Activated naive CD4-positive, alpha-beta T cell treated with anti-CD3 and anti-CD28 coated beads for 36 hours (primary cell): ENCODE measurements at regions of chr1 and their contacts with region 1.

Region 1: GRCh38 chr1:51235673-51236530 is at the start of gene RNF11:
- DNase-seq: peak; percentile 93
- H3K4me3 Mint-ChIP-seq: peak within 1 kb of the TSS; percentile 96
- H3K27ac Mint-ChIP-seq: peak within 1 kb of the TSS; percentile 89
- H3K4me1 Mint-ChIP-seq: peaks cover 35% of the 10 kb centered on the region
- H3K27me3 Mint-ChIP-seq: no peaks in the 10 kb centered on the region
- total RNA-seq, gene RNF11: 14.9 to 17.7 TPM

Region 2: DNA sequence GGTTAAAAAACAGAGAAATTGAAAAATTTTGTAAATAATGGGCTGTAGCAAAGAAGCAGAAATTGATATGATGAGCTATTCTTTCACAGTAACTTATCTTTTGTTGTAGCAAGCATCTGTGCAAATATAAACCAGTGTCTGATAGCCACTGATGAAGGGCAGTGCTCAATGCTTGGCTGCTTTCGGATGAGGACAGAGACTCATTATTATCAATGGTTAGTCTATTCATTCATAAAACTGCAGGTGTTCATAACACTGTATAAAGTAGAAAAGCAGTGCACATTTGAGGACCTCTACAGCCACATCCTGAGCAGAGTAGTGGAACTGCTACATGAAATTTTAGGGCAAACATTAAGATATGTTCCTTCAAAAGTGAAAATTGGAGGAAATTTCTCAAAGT is 383.0 kb before region 1 on chr1:
- CTCF ChIA-PET with region 1: no interaction called
- intact Hi-C with region 1: no loop called
- DNase-seq: no peak
- H3K4me3 Mint-ChIP-seq: no peak overlapping the region
- H3K27ac Mint-ChIP-seq: no peak overlapping the region
- H3K4me1 Mint-ChIP-seq: peaks cover 14% of the 10 kb centered on the region
- H3K27me3 Mint-ChIP-seq: no peaks in the 10 kb centered on the region

Region 3: GRCh38 chr1:50959913-50960844 is 275.7 kb before region 1 on chr1 and contains the start of gene FAF1:
- CTCF ChIA-PET with region 1: no interaction called
- intact Hi-C with region 1: loop called (anchors 2 kb)
- DNase-seq: peak; percentile 97
- H3K4me3 Mint-ChIP-seq: peak within 1 kb of the TSS; percentile 86
- H3K27ac Mint-ChIP-seq: peak within 1 kb of the TSS; percentile 85
- H3K4me1 Mint-ChIP-seq: peaks cover 25% of the 10 kb centered on the region
- H3K27me3 Mint-ChIP-seq: no peaks in the 10 kb centered on the region
- total RNA-seq, gene FAF1: 87.9 to 90.1 TPM

Region 4: DNA sequence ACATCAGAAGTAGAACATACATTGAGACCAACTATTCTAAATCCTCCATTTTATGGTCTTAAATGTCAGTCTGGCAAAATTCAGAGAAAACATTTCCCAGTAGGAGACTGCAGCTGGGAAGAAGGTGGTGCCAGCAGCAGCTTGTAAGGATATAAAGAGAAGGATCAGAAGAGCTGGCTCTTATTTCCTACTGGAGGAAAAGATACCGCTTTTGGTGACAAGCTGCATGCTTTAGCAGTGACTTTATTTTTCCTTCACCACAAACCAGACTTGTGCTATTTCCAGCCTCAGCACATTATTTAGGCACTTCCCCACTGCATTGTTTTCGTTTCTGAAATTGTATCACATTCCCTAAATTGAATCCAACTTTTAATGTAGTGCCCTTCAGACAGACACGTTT is 28.5 kb after region 1 on chr1:
- CTCF ChIA-PET with region 1: no interaction called
- intact Hi-C with region 1: loop called (anchors 2 kb)
- DNase-seq: no peak
- H3K4me3 Mint-ChIP-seq: no peak overlapping the region
- H3K27ac Mint-ChIP-seq: no peak overlapping the region
- H3K4me1 Mint-ChIP-seq: peaks cover 62% of the 10 kb centered on the region
- H3K27me3 Mint-ChIP-seq: no peaks in the 10 kb centered on the region

Region 5: DNA sequence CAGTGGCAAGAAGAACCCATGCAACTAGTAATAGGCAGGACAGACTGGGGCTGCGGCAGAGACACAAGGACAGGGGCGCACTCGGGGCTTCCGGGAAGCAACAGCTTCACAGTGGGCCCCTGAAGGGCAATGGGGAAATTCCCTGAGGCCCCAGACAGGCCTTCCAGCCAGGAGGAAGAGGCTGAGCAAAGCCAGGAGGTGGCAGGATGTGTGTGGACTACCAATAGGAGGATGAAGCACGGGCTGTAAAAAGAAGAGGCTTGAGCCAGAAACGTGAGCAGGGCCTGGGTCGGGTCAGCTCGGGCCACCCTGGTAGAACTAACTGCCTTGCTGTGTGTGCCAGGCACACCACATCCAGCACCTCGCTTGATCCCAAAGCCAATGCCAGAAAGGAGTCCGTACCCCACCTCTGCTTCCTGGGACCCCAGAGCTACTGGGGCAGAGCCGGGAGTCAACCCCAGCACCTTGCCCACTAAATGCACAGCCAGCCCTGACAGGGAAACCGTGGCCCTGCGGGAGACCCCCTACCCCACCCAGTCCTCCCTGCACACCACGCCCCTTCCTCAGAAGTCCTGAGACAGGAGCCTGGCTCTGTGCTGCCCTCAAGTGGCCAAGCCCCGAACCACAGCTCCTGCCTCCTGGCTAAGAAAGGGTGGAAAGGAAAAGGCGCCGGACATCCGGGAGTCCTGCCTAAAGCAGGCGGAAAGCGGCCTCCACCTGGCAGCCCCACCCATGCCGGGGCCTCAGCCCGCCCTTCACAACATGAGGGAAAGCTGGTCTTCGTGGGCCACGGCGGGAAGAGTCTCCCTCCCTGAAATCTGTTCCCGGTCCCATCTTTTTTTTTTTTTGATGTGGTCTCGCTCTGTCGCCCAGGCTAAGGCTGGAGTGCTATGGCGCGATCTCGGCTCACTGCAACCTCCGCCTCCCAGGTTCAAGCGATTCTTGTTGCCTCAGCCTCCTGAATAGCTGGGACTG is 60.8 kb after region 1 on chr1:
- CTCF ChIA-PET with region 1: interaction called, 5 read pairs
- intact Hi-C with region 1: loop called (anchors 1 kb)
- DNase-seq: peak; percentile 86
- H3K4me3 Mint-ChIP-seq: peak overlapping the region; percentile 63
- H3K27ac Mint-ChIP-seq: no peak overlapping the region
- H3K4me1 Mint-ChIP-seq: peaks cover 6% of the 10 kb centered on the region
- H3K27me3 Mint-ChIP-seq: no peaks in the 10 kb centered on the region

Region 6: DNA sequence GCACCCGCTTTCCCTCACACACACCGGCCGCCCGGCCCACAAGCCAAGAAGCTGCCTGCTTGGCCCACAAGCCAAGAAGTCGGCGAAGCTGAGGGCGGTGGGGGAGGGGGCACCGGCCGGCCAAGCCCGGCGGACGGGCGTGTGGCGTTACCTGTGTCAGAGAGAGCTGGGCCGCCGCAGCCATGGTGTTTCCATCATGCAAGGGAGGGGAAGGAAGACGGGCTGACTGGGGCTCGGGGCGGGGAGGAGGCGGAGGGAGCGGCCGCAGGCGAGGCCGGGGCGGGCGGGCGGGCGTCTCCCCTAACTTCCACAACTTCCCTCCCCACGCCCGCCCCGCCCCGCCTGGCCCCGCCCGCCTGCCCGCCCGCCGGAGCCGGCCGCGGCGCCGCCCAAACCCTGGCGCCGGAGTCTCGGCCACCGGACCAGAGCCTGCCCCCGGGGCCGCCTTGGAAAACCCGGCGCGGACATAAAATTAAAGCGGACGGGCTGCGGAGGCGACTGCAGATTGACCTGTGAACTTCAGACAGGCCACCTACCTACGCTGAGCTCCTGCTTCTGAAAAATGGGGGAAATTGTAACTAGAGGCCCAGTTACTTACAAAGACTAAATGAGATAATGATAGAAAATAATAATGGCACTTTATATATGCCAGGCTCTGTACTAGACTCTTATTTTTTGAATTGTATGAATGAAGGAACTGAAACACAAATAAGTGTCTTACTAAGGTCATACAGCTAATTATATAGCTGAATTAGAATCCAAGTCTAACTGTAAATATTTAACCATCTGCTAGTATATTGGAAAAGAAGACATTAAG is 283.4 kb after region 1 on chr1 and contains the start of gene EPS15:
- CTCF ChIA-PET with region 1: no interaction called
- intact Hi-C with region 1: loop called (anchors 5 kb)
- DNase-seq: peak; percentile 89
- H3K4me3 Mint-ChIP-seq: peak within 1 kb of the TSS; percentile 87
- H3K27ac Mint-ChIP-seq: peak within 1 kb of the TSS; percentile 84
- H3K4me1 Mint-ChIP-seq: peaks cover 47% of the 10 kb centered on the region
- H3K27me3 Mint-ChIP-seq: no peaks in the 10 kb centered on the region
- total RNA-seq, gene EPS15: 56.0 to 57.0 TPM

Region 7: DNA sequence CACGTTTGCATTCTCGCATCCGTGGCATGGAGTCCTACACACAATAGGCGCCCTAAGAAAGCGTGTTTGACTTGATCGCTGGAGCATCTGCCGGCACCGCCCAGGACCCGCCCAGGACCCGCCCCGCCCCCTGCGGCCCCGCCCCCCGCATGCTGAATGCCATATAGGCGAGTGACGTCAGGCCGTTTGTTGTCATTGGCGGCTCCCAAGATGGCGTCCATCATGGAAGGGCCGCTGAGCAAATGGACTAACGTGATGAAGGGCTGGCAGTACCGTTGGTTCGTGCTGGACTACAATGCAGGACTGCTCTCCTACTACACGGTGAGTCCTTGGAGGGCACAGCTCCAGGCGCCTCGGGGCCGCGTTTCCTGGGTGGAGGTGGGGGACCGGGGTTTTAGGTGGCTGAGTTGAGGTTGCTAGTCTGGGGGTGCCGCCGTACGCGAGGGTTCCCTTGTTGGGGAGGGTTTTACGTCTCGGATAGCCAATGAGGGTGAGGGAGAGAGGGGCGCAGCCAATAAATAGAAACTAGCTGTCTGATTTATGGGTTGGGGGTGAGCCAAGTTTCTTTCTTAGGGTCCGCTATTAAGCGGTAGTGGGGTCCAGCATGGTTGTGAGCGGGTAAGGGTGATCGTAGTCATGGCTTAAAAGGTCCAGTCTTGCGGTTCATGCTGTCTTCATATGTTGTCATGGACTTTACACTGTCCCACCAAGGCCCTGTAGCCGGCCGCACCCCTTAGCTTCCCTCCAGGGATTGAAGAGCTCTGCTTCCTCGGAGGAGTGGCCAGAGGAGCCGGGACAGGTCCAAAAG is 381.2 kb after region 1 on chr1 and contains the start of gene OSBPL9:
- CTCF ChIA-PET with region 1: no interaction called
- intact Hi-C with region 1: loop called (anchors 1 kb)
- DNase-seq: peak; percentile 94
- H3K4me3 Mint-ChIP-seq: peak within 1 kb of the TSS; percentile 98
- H3K27ac Mint-ChIP-seq: peak within 1 kb of the TSS; percentile 89
- H3K4me1 Mint-ChIP-seq: peaks cover 25% of the 10 kb centered on the region
- H3K27me3 Mint-ChIP-seq: no peaks in the 10 kb centered on the region
- total RNA-seq, gene OSBPL9: 38.2 to 40.7 TPM

Region 8: DNA sequence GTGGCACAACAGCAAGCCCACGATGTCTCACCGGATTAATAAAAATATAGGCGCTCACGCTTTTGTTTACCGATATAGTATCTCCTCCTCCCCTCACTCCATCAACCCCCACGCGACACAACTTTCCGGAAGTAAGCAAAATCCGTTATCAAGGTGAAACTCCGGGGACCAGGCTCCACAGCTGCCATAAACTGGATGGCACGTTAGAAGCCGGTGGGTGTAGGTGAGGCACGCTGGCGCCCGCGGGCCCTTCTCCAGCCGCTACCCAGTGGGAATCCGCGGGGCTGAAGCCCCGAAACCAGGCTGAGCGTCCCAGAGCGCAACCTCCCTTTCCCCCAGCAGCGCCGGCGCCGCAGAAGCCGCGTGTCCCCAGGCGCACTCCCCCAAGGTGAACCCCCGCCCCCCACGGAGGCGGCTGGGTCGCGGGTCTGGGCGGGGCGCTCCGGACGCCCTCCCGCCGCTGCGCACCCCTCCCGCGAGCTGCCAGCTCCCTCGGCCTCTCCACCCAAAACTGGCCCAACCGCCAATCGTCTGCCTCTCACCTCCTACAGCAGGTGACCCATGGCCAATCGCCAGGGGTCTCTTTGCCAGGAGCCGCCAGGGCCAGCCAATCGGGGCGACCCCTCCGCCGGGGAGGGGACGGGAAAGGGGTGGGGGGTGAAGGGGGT is 493.4 kb after region 1 on chr1:
- CTCF ChIA-PET with region 1: no interaction called
- intact Hi-C with region 1: loop called (anchors 2 kb)
- DNase-seq: peak; percentile 97
- H3K4me3 Mint-ChIP-seq: peak overlapping the region; percentile 87
- H3K27ac Mint-ChIP-seq: peak overlapping the region; percentile 87
- H3K4me1 Mint-ChIP-seq: peaks cover 33% of the 10 kb centered on the region
- H3K27me3 Mint-ChIP-seq: no peaks in the 10 kb centered on the region

Region 9: GRCh38 chr1:51784997-51785421 is 549.1 kb after region 1 on chr1:
- CTCF ChIA-PET with region 1: no interaction called
- intact Hi-C with region 1: no loop called
- DNase-seq: no peak
- H3K4me3 Mint-ChIP-seq: no peak overlapping the region
- H3K27ac Mint-ChIP-seq: no peak overlapping the region
- H3K4me1 Mint-ChIP-seq: no peaks in the 10 kb centered on the region
- H3K27me3 Mint-ChIP-seq: no peaks in the 10 kb centered on the region